Common myeloid progenitor, CD34-positive (primary cell): ENCODE measurements at regions of chr3 and their contacts with region 1.

Region 1: GRCh38 chr3:129039271-129040038 is 21.1 kb upstream of the GP9 start:
- DNase-seq: peak in 2 of 3 donors; percentile 63 to 64
- H3K4me3 ChIP-seq: no peak overlapping the region
- H3K27ac ChIP-seq: no peak overlapping the region
- H3K4me1 ChIP-seq: peaks cover 0 to 37% (median 27%) of the 10 kb centered on the region in 4 experiments
- H3K27me3 ChIP-seq: no peaks in the 10 kb centered on the region

Region 2: DNA sequence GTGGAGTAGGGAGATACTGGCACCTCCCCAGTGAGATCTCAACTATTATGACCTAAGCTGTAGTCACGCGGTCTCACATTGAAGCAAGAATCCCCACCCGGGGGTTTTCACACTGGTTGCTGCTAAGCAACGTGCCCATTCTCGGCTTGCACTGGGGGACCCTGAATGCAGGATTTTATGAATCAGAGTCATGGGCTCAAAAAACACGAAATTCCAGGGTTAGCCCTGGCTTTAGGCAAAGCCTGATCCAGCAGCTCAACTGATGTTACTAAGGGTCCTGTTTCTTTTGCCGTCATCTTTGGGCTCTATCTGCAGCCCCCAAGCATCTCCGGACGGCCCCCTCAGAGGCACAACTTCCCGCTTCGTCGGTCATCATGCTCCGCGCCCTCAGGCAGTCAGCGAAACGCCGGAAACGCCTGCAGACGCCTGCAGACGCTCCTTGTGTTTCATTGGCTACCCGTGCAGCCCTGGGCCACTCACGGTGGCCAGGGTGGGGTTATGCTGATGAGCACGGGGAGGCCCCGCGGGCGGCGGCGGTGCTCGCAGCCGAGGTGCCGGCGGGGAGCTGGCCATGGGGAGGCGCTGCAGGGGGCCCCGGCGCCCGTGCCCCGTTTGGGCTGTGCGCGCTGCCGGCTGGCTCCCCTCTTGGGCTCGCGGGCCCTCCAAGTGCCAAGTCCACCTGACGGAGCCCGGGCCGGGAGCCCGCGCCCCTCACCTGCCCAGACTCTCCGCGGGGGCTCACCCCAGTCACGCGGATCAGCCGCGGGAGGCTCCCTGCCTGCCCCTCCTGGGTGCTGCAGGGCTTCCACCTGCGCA is 12.5 kb before region 1 on chr3:
- CTCF ChIA-PET with region 1: interaction called, 26 read pairs
- POLR2A ChIA-PET with region 1: interaction called, 3 read pairs
- DNase-seq: peak; percentile 93 to 98 (median 97)
- H3K4me3 ChIP-seq: peak overlapping the region; percentile 35 to 76 (median 55)
- H3K27ac ChIP-seq: peak overlapping the region in 1 of 2 experiments; percentile 49
- H3K4me1 ChIP-seq: peaks cover 0 to 30% (median 22%) of the 10 kb centered on the region in 4 experiments
- H3K27me3 ChIP-seq: no peaks in the 10 kb centered on the region